B cell (primary cell): ENCODE measurements at regions of chr6 and their contacts with region 1.

Region 1: GRCh38 chr6:30616811-30617564 is at the start of gene PPP1R10:
- DNase-seq: peak; percentile 100
- ATAC-seq: peak; percentile 77
- H3K4me3 ChIP-seq: peak within 1 kb of the TSS; percentile 93 to 100 (median 98)
- H3K4me3 Mint-ChIP-seq: peak within 1 kb of the TSS; percentile 92
- H3K27ac ChIP-seq: peak within 1 kb of the TSS; percentile 99
- H3K27ac Mint-ChIP-seq: peak within 1 kb of the TSS; percentile 100
- H3K4me1 ChIP-seq: peaks cover 33 to 36% of the 10 kb centered on the region in 2 donors
- H3K4me1 Mint-ChIP-seq: peaks cover 38% of the 10 kb centered on the region
- H3K27me3 ChIP-seq: no peaks in the 10 kb centered on the region
- H3K27me3 Mint-ChIP-seq: no peaks in the 10 kb centered on the region
- CTCF ChIP-seq: no peak
- total RNA-seq, gene PPP1R10: 157 and 177 TPM in 2 replicates

Region 2: GRCh38 chr6:30489081-30490025 is 127.6 kb before region 1 on chr6 and contains the start of gene HLA-E:
- CTCF ChIA-PET with region 1: interaction called, 10 read pairs
- POLR2A ChIA-PET with region 1: interaction called, 7 read pairs
- intact Hi-C with region 1: loop called (anchors 1 kb)
- DNase-seq: peak; percentile 98
- ATAC-seq: peak; percentile 84
- H3K4me3 ChIP-seq: peak within 1 kb of the TSS; percentile 99 to 100 (median 100)
- H3K4me3 Mint-ChIP-seq: peak within 1 kb of the TSS; percentile 99
- H3K27ac ChIP-seq: peak within 1 kb of the TSS; percentile 97 to 98
- H3K27ac Mint-ChIP-seq: peak within 1 kb of the TSS; percentile 98
- H3K4me1 ChIP-seq: peaks cover 38 to 50% of the 10 kb centered on the region in 2 donors
- H3K4me1 Mint-ChIP-seq: peaks cover 56% of the 10 kb centered on the region
- H3K27me3 ChIP-seq: no peaks in the 10 kb centered on the region
- H3K27me3 Mint-ChIP-seq: no peaks in the 10 kb centered on the region
- CTCF ChIP-seq: no peak
- total RNA-seq, gene HLA-E: 1,023 and 1,043 TPM in 2 replicates

Region 3: GRCh38 chr6:30590994-30591393 is 26.0 kb before region 1 on chr6:
- CTCF ChIA-PET with region 1: interaction called, 3 read pairs
- POLR2A ChIA-PET with region 1: interaction called, 11 read pairs
- intact Hi-C with region 1: loop called (anchors 2 kb)
- DNase-seq: no peak
- ATAC-seq: no peak
- H3K4me3 ChIP-seq: no peak overlapping the region
- H3K4me3 Mint-ChIP-seq: no peak overlapping the region
- H3K27ac ChIP-seq: no peak overlapping the region
- H3K27ac Mint-ChIP-seq: no peak overlapping the region
- H3K4me1 ChIP-seq: no peaks in the 10 kb centered on the region
- H3K4me1 Mint-ChIP-seq: no peaks in the 10 kb centered on the region
- H3K27me3 ChIP-seq: no peaks in the 10 kb centered on the region
- H3K27me3 Mint-ChIP-seq: no peaks in the 10 kb centered on the region
- CTCF ChIP-seq: no peak

Region 4: GRCh38 chr6:30672445-30673253 is 55.7 kb after region 1 on chr6 and contains the start of gene DHX16:
- CTCF ChIA-PET with region 1: interaction called, 8 read pairs
- POLR2A ChIA-PET with region 1: interaction called, 22 read pairs
- intact Hi-C with region 1: loop called (anchors 1 kb)
- DNase-seq: peak; percentile 97
- ATAC-seq: peak; percentile 88
- H3K4me3 ChIP-seq: peak within 1 kb of the TSS; percentile 85 to 100 (median 98)
- H3K4me3 Mint-ChIP-seq: peak within 1 kb of the TSS; percentile 84
- H3K27ac ChIP-seq: peak within 1 kb of the TSS; percentile 54 to 75
- H3K27ac Mint-ChIP-seq: peak within 1 kb of the TSS; percentile 87
- H3K4me1 ChIP-seq: peaks cover 10 to 19% of the 10 kb centered on the region in 2 donors
- H3K4me1 Mint-ChIP-seq: peaks cover 29% of the 10 kb centered on the region
- H3K27me3 ChIP-seq: no peaks in the 10 kb centered on the region
- H3K27me3 Mint-ChIP-seq: no peaks in the 10 kb centered on the region
- CTCF ChIP-seq: peak; percentile 79
- total RNA-seq, gene DHX16: 51.1 and 58.3 TPM in 2 replicates

Region 5: GRCh38 chr6:30730601-30731435 is 113.8 kb after region 1 on chr6:
- CTCF ChIA-PET with region 1: interaction called, 24 read pairs
- POLR2A ChIA-PET with region 1: interaction called, 10 read pairs
- intact Hi-C with region 1: no loop called
- DNase-seq: peak; percentile 86
- ATAC-seq: peak; percentile 89
- H3K4me3 ChIP-seq: peak overlapping the region in 3 of 5 experiments; percentile 5 to 29 (median 25)
- H3K4me3 Mint-ChIP-seq: peak overlapping the region; percentile 40
- H3K27ac ChIP-seq: no peak overlapping the region
- H3K27ac Mint-ChIP-seq: peak overlapping the region; percentile 42
- H3K4me1 ChIP-seq: peaks cover 22 to 23% of the 10 kb centered on the region in 2 donors
- H3K4me1 Mint-ChIP-seq: peaks cover 25% of the 10 kb centered on the region
- H3K27me3 ChIP-seq: no peaks in the 10 kb centered on the region
- H3K27me3 Mint-ChIP-seq: no peaks in the 10 kb centered on the region
- CTCF ChIP-seq: peak; percentile 77

Region 6: DNA sequence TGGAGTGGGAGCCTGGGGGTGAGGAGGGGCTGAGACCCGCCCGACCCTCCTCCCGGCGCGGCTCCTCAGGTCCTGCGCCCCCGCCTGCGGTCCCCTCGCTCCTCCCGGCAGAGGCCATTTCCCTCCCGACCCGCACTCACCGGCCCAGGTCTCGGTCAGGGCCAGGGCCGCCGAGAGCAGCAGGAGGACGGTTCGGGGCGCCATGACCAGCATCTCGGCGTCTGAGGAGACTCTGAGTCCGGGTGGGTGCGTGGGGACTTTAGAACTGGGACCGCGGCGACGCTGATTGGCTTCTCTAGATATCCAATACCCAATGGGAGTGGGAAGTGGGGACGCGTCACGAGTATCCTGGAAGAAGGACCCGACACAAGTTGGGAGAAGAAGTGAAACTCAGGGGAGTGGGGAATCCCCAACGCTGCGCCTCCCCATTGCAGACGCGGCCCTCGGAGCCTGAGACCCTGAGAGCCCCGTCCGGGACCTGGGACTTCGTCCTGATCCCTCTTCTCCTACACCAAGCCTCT is 740.0 kb after region 1 on chr6 and contains the start of gene HLA-B:
- CTCF ChIA-PET with region 1: no interaction called
- POLR2A ChIA-PET with region 1: no interaction called
- intact Hi-C with region 1: loop called (anchors 10 kb)
- DNase-seq: peak; percentile 96
- ATAC-seq: peak; percentile 88
- H3K4me3 ChIP-seq: peak within 1 kb of the TSS; percentile 51 to 98 (median 87)
- H3K4me3 Mint-ChIP-seq: peak within 1 kb of the TSS; percentile 99
- H3K27ac ChIP-seq: peak within 1 kb of the TSS; percentile 98 to 100
- H3K27ac Mint-ChIP-seq: peak within 1 kb of the TSS; percentile 100
- H3K4me1 ChIP-seq: peaks cover 43 to 44% of the 10 kb centered on the region in 2 donors
- H3K4me1 Mint-ChIP-seq: peaks cover 55% of the 10 kb centered on the region
- H3K27me3 ChIP-seq: no peaks in the 10 kb centered on the region
- H3K27me3 Mint-ChIP-seq: peaks cover 3% of the 10 kb centered on the region
- CTCF ChIP-seq: no peak
- total RNA-seq, gene HLA-B: 3,910 and 4,028 TPM in 2 replicates